PC-9 (cell line): ENCODE measurements at regions of chr19 and their contacts with region 1.

Region 1: DNA sequence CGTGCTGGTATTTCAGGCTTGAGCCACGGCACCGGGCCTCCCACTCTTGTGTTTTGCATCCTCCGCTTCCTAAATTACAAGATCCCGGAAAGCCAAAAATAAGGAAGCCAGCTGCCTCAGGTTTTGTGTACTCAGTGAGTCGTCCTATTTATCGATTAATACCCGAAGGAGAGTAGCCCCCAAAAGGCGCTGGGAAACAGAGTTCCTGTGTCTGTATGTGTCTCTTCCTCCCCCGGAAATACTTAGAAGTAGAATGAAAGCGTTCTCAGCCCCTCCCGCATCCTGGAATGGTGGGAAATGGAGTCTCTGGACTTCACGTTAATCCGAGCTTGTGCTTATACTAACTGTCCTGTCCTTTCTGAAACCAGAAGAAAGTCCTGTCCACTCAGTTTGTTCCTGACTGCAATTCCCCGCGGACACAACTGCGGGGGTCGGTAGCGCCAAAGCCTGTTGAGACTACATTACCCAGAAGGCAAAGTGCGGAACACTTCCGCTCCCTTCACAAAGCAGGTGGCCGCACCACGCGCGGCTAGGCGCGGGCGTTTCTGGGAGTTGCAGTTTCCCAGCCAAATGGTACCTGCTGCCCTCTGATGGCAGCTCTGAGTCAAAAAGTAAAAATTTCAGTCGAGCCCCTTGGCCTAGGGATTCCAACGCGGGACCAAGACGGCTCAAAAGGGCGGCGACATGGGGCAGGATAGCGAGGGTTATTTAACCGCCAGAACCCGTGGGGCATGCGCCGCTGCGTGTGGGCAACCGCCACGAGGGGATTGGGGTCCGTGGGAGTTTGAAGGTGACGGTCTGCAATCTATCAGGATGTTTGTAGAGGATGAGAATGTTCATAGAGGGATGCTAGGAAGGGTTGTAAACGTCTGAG is 2.2 kb upstream of the GSK3A start:
- DNase-seq: peak; percentile 88 to 91
- H3K4me3 ChIP-seq: peak overlapping the region; percentile 88
- H3K27ac ChIP-seq: peak overlapping the region; percentile 35
- H3K4me1 ChIP-seq: peaks cover 17% of the 10 kb centered on the region
- H3K27me3 ChIP-seq: no peaks in the 10 kb centered on the region
- CTCF ChIP-seq: peak; percentile 66

Region 2: DNA sequence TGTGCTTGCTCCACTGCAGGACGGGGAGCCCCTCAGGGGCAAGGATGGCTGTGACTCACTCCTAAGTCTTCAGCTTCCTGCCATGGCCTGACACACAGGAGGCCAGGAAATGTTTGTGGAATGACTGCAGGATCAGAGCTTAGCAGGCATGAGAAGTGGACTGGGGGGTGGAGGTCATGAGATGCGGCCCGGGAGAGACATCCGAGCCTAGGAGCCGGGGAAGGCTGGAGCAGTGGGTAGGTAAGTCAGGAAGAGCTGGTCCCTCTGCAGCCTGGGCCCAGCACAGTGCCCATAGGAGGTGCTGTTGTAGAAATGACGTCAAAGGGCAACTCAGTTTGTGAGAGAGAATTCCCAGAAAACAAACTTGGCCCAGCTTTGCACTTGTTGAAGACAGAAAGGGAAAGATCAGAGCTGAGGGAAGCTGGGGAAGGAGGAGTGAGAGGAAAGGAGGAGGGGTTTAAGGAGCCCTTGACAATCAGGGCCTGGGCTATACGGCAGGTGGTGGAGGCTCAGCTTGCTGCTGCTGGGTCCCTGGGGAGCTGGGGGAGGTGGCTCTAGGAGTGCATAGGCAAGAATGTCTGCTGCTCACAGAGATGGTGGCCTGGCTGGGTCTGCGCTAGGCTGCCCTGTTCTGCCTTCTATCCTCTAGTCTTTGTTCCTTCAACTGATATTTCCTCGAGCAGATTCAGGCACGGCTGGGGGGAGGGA is 130.8 kb before region 1 on chr19:
- CTCF ChIA-PET with region 1: no interaction called
- POLR2A ChIA-PET with region 1: no interaction called
- intact Hi-C with region 1: loop called (anchors 5 kb)
- DNase-seq: peak; percentile 49 to 91
- H3K4me3 ChIP-seq: no peak overlapping the region; the same call in 1 of the 2 replicates
- H3K27ac ChIP-seq: peak overlapping the region; percentile 72
- H3K4me1 ChIP-seq: peaks cover 27% of the 10 kb centered on the region
- H3K27me3 ChIP-seq: no peaks in the 10 kb centered on the region
- CTCF ChIP-seq: peak; percentile 40; the same call in 1 of the 2 replicates

Region 3: DNA sequence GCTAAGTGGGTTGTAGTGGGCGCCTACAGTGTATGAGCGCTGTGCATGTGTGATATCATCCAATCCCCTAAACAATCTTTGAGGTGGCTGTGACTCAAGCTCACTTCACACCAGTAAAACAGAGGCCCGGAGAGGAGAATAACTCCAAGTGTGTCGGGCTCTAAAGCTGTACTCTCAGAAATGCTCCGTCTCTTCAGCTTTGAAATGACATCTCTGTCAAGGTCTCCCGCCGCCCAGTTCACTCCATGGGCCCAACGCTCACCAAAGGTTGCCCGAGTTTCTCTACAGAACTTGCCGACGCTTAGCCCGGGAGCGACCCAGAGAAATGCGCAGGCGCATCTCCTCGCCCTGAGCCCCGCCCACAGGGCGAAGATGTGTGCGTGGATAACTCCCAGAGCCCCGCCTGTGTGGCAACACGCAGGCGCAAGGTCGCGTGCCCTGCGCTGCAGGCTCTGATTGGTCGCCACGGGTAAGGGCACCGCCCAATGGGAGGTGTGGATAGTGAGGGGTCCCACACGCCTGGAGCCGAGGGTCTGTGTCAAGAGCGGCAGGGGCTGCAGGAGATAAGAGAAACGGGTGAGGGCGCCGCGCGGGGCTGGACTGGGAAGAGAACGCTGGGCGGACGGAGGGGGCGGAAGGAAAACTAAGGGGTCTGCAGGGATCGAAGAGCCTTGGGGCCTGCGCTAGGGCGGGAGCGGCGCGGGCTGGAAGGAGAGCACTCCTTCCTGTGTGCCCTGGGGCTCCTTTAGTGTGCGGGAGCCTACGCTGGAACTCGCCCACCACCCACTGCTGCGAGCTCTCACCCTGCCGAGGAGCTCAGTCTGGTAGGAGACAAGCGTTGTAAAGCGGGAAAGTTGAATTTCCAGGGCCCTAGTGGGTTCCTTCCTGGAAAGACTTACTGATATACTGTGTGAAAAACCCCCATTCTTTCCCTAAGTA is 24.5 kb before region 1 on chr19 and contains the start of gene ZNF526:
- CTCF ChIA-PET with region 1: no interaction called
- POLR2A ChIA-PET with region 1: interaction called, 5 read pairs
- intact Hi-C with region 1: loop called (anchors 1 kb)
- DNase-seq: peak; percentile 92 to 97
- H3K4me3 ChIP-seq: peak within 1 kb of the TSS; percentile 84
- H3K27ac ChIP-seq: peak within 1 kb of the TSS; percentile 27
- H3K4me1 ChIP-seq: peaks cover 35% of the 10 kb centered on the region
- H3K27me3 ChIP-seq: no peaks in the 10 kb centered on the region
- CTCF ChIP-seq: no peak
- total RNA-seq, gene ZNF526: 13.4 and 13.9 TPM in 2 replicates

Region 4: GRCh38 chr19:42283143-42284065 is 38.8 kb after region 1 on chr19:
- CTCF ChIA-PET with region 1: interaction called, 7 read pairs
- POLR2A ChIA-PET with region 1: interaction called, 16 read pairs
- intact Hi-C with region 1: loop called (anchors 1 kb)
- DNase-seq: peak; percentile 71 to 94
- H3K4me3 ChIP-seq: peak overlapping the region; percentile 66
- H3K27ac ChIP-seq: no peak overlapping the region
- H3K4me1 ChIP-seq: peaks cover 42% of the 10 kb centered on the region
- H3K27me3 ChIP-seq: no peaks in the 10 kb centered on the region
- CTCF ChIP-seq: no peak

Region 5: GRCh38 chr19:42325273-42325895 is 80.8 kb after region 1 on chr19 and contains the start of gene MEGF8:
- CTCF ChIA-PET with region 1: no interaction called
- POLR2A ChIA-PET with region 1: interaction called, 4 read pairs
- intact Hi-C with region 1: loop called (anchors 1 kb)
- DNase-seq: peak; percentile 96 to 98
- H3K4me3 ChIP-seq: peak within 1 kb of the TSS; percentile 94
- H3K27ac ChIP-seq: no peak within 1 kb of the TSS
- H3K4me1 ChIP-seq: peaks cover 14% of the 10 kb centered on the region
- H3K27me3 ChIP-seq: no peaks in the 10 kb centered on the region
- CTCF ChIP-seq: no peak; the same call in none of the 2 replicates
- total RNA-seq, gene MEGF8: 40.6 and 49.0 TPM in 2 replicates

Region 6: GRCh38 chr19:42440357-42441048 is 195.9 kb after region 1 on chr19:
- CTCF ChIA-PET with region 1: interaction called, 11 read pairs
- POLR2A ChIA-PET with region 1: interaction called, 6 read pairs
- intact Hi-C with region 1: no loop called
- DNase-seq: peak in 1 of 2 experiments; percentile 65
- H3K4me3 ChIP-seq: peak overlapping the region; percentile 16; the same call in 1 of the 2 replicates
- H3K27ac ChIP-seq: peak overlapping the region; percentile 89
- H3K4me1 ChIP-seq: peaks cover 58% of the 10 kb centered on the region
- H3K27me3 ChIP-seq: no peaks in the 10 kb centered on the region
- CTCF ChIP-seq: peak; percentile 89